AG04450 (cell line): ENCODE measurements at regions of chr12 and their contacts with region 1.

Region 1: DNA sequence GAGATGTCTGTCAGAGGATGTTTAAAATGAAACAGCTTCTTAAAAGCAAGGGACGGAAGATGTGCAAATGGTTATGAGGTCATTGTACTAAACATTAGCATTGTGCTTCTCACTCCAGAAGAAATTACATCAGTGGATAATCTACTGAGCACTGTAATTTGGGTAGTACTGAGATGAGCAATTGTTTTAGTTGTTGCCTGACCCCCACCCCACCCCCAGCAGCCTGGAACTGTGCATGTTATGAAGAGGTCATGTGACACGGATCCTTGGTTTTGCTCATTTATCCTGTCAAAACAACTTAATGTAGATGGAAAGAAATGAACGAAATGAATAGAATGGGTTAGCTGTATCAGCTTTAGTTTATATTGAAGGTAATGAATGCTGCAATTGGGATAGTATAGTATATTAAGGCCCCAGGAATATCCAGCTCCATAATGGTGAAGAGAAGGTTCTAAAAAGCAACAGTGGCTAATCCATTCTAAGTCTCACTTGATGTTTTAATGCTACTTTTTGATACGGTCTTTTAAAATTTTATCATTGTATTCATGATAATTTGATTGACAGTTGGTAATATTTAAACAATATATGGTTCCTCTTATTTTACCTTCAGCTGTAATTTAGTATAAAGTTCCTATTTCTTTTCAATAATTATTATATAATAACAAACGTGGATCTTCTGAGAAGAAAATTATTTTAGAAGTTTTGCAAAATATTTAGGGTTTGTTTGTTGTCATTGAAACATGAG is 58.5 kb downstream of the WNK1 start:
- DNase-seq: no peak
- H3K4me3 ChIP-seq: no peak overlapping the region
- H3K27ac ChIP-seq: no peak overlapping the region
- H3K27me3 ChIP-seq: no peaks in the 10 kb centered on the region
- CTCF ChIP-seq: no peak

Region 2: DNA sequence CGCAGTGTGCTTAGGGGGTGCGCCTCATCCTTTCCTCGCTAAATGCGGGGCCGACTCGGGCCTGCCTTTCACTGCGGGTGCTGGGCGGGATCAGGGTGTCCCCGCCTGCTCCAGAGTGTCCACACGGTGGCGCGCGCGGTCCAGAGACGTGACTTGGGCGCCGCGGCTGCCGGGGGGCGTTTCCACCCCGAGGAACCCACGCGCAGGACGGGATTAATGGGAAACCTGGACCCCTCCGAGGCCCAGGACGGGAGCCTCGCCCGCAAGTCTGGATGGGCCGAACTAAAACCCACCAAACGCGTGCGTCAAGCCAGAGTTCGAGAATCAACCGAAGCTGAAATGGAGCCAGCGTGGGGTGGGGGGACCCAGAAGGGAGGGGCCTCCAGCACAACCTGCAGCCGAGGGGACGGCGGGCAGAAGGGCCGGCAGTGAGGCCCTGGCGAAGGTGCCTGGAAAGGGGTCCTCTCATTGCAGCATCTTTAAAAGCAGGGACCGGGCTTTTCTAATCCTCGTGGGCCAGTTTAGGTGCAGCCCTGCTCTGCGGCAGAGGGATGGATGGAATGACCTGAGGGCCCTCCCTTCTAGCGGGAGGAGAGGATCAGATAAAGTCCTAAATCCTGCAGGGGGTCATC is 240.9 kb before region 1 on chr12:
- CTCF ChIA-PET with region 1: interaction called, 55 read pairs
- POLR2A ChIA-PET with region 1: no interaction called
- DNase-seq: peak; percentile 48
- H3K4me3 ChIP-seq: peak overlapping the region; percentile 69
- H3K27ac ChIP-seq: peak overlapping the region; percentile 69
- H3K27me3 ChIP-seq: peaks cover 10% of the 10 kb centered on the region
- CTCF ChIP-seq: peak; percentile 90

Region 3: GRCh38 chr12:751192-751998 is 59.4 kb before region 1 on chr12:
- CTCF ChIA-PET with region 1: interaction called, 53 read pairs
- POLR2A ChIA-PET with region 1: interaction called, 7 read pairs
- DNase-seq: peak; percentile 94
- H3K4me3 ChIP-seq: peak overlapping the region; percentile 64
- H3K27ac ChIP-seq: peak overlapping the region; percentile 68
- H3K27me3 ChIP-seq: no peaks in the 10 kb centered on the region
- CTCF ChIP-seq: peak; percentile 87

Region 4: DNA sequence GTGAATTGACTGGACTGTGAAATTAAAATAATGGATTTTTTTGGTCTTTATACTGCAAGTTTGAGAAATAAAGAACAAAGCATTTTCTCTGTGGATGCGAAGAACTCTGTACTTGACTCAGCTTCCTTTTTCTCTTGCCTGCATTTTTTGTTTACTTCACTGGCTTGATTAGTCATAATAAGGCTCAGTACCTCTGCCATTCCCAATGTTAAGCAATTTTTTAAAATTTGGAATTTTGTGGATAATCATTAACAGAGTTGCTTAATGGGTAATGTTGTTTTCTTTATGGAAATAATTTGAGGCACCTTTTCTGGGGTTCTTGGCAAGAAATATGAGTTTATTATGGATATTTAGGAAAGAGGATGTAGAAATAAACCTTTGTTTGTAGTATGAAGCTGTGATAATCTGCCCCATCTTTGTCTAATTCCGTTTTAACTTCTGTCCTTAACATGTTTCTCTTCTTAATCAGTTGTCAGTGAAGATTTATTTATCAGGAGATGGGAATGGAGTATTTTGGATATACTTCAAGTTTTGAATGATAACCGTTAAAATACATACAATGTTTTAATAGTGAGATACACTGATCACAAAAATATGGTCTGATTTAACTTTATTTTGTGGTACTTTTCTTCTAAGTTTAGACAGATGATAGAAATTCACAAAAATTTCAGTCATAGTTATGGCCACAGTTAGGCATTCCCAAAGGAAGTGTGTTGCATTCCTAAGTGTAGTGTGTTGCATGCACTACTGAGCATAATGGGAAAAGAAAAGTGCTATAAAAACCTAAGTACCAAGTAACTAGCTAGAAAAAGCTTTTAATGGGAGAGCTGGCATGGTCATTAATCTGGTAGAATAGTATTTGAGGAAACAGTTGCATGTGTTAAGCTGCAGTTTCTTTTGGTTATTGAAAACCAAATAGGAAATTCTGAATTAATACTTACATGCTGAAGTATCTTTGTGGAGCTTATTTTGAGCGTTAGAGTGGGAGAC is 30.8 kb before region 1 on chr12:
- CTCF ChIA-PET with region 1: interaction called, 27 read pairs
- POLR2A ChIA-PET with region 1: interaction called, 5 read pairs
- DNase-seq: peak; percentile 7
- H3K4me3 ChIP-seq: no peak overlapping the region
- H3K27ac ChIP-seq: no peak overlapping the region
- H3K27me3 ChIP-seq: no peaks in the 10 kb centered on the region
- CTCF ChIP-seq: no peak

Region 5: GRCh38 chr12:823028-823698 is 12.3 kb after region 1 on chr12:
- CTCF ChIA-PET with region 1: interaction called, 11 read pairs
- POLR2A ChIA-PET with region 1: no interaction called
- DNase-seq: no peak
- H3K4me3 ChIP-seq: no peak overlapping the region
- H3K27ac ChIP-seq: no peak overlapping the region
- H3K27me3 ChIP-seq: no peaks in the 10 kb centered on the region
- CTCF ChIP-seq: no peak

Region 6: DNA sequence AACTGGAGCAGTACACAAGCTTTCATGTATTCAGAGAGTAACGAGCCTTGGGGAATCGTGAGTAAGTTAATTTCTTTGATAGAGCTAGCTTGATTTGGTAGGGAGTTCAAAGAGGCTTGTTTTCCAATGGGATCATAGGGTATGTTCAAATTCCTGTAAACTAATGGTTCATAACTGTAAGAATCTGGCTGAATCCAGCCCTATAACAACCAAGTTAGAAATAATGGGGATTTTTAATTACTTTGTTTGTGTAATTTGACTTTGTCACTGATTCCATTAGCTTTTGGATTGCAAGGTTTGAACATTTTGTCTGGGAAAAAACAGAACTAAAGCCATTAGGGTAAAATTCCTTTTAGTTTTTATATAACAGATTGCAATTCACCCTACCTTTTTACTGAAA is 35.6 kb after region 1 on chr12:
- CTCF ChIA-PET with region 1: interaction called, 10 read pairs
- POLR2A ChIA-PET with region 1: no interaction called
- DNase-seq: no peak
- H3K4me3 ChIP-seq: no peak overlapping the region
- H3K27ac ChIP-seq: no peak overlapping the region
- H3K27me3 ChIP-seq: no peaks in the 10 kb centered on the region
- CTCF ChIP-seq: no peak

Region 7: DNA sequence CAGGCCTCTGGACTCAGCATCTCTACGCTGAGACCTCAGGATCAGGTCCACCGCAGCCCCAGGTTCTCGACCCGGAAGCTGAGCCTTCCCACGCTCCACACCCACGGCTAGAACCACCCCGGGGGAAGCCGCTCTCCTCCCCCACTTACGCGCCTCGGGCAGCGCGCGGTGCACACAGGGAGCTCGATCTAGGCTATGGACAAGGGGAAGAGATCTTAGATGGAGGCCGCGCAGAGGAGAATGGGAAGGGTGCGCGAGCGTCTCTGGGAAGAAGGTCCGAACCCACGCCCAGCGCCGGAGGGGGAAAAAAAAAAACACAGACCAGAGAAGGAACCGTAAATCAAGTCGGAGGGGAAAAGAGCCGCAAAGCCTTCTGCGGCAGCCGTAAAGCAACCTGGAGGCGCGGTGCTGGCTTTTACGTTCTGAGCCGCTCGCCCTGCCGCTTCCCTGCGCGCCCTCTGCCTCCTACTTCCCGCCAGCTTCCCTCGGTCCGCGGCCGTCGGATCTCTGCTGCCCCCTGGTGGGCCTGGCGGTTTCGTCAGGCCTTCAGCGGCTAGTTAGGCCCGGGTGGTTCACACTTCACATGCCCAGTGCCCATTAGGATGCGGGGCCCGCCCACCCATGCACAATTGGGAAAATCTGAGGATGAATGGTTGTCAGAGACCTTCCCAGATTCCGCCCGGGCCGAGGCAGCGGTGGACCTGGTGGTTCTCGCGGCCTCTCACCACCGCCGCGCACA is 138.8 kb after region 1 on chr12 and contains the start of gene RAD52:
- CTCF ChIA-PET with region 1: interaction called, 19 read pairs
- POLR2A ChIA-PET with region 1: no interaction called
- DNase-seq: peak; percentile 98
- H3K4me3 ChIP-seq: peak within 1 kb of the TSS; percentile 94
- H3K27ac ChIP-seq: peak within 1 kb of the TSS; percentile 93
- H3K27me3 ChIP-seq: no peaks in the 10 kb centered on the region
- CTCF ChIP-seq: peak; percentile 94
- polyA plus RNA-seq, gene RAD52: 13.8 and 18.8 TPM in 2 replicates

Region 8: GRCh38 chr12:1013618-1014489 is 203.0 kb after region 1 on chr12:
- CTCF ChIA-PET with region 1: no interaction called
- POLR2A ChIA-PET with region 1: no interaction called
- DNase-seq: peak; percentile 45
- H3K4me3 ChIP-seq: no peak overlapping the region
- H3K27ac ChIP-seq: peak overlapping the region; percentile 59
- H3K27me3 ChIP-seq: no peaks in the 10 kb centered on the region
- CTCF ChIP-seq: no peak